MCF 10A (cell line): ENCODE measurements at regions of chr6 and their contacts with region 1.

Region 1: GRCh38 chr6:45421709-45422502 is 44.2 kb upstream of the SUPT3H start:
- DNase-seq: peak; percentile 54
- H3K4me3 Mint-ChIP-seq: peak overlapping the region; percentile 91
- H3K27ac Mint-ChIP-seq: peak overlapping the region; percentile 35
- H3K4me1 Mint-ChIP-seq: peaks cover 17% of the 10 kb centered on the region
- H3K27me3 Mint-ChIP-seq: no peaks in the 10 kb centered on the region
- CTCF ChIP-seq: no peak

Region 2: GRCh38 chr6:44489910-44490604 is 931.8 kb before region 1 on chr6:
- CTCF ChIA-PET with region 1: interaction called, 3 read pairs
- POLR2A ChIA-PET with region 1: no interaction called
- intact Hi-C with region 1: loop called (anchors 5 kb)
- DNase-seq: peak; percentile 95
- H3K4me3 Mint-ChIP-seq: peak overlapping the region; percentile 66
- H3K27ac Mint-ChIP-seq: peak overlapping the region; percentile 95
- H3K4me1 Mint-ChIP-seq: peaks cover 54% of the 10 kb centered on the region
- H3K27me3 Mint-ChIP-seq: no peaks in the 10 kb centered on the region
- CTCF ChIP-seq: no peak

Region 3: DNA sequence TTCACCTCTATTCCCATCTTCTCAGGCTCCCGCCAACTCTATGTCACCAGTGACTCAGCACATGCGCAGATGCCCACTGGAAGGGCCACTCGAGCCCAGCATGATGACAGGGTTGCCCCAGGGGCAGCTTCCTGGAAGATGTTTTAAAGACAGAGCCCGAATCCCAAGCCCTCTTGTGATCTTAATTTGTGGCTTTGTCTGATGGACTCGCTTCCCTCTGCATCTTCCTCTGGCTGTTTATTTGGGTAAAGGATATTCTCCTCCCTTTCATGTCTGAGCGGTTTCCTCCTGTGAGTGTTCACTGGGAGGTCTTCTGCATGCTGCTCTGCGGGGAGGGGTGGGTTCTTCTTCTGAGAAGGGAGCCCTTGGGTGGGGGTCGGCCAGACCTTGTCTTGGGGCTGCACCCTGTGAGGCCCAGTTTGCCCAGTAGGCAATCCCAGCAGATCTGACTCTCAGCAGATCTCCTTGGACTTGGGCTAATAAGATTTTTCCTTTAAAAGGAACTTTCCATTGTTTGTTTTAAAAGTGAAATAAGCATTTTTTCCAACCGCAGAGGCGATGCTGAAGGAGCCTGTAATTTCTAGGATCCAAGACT is 633.4 kb before region 1 on chr6:
- CTCF ChIA-PET with region 1: no interaction called
- POLR2A ChIA-PET with region 1: no interaction called
- intact Hi-C with region 1: no loop called
- DNase-seq: no peak
- H3K4me3 Mint-ChIP-seq: no peak overlapping the region
- H3K27ac Mint-ChIP-seq: no peak overlapping the region
- H3K4me1 Mint-ChIP-seq: peaks cover 9% of the 10 kb centered on the region
- H3K27me3 Mint-ChIP-seq: no peaks in the 10 kb centered on the region
- CTCF ChIP-seq: no peak

Region 4: GRCh38 chr6:44855562-44856411 is 566.1 kb before region 1 on chr6:
- CTCF ChIA-PET with region 1: no interaction called
- POLR2A ChIA-PET with region 1: no interaction called
- intact Hi-C with region 1: loop called (anchors 10 kb)
- DNase-seq: no peak
- H3K4me3 Mint-ChIP-seq: peak overlapping the region; percentile 50
- H3K27ac Mint-ChIP-seq: peak overlapping the region; percentile 74
- H3K4me1 Mint-ChIP-seq: peaks cover 14% of the 10 kb centered on the region
- H3K27me3 Mint-ChIP-seq: no peaks in the 10 kb centered on the region
- CTCF ChIP-seq: no peak

Region 5: GRCh38 chr6:45310118-45310788 is 111.7 kb before region 1 on chr6:
- CTCF ChIA-PET with region 1: no interaction called
- POLR2A ChIA-PET with region 1: no interaction called
- intact Hi-C with region 1: no loop called
- DNase-seq: peak; percentile 1
- H3K4me3 Mint-ChIP-seq: no peak overlapping the region
- H3K27ac Mint-ChIP-seq: no peak overlapping the region
- H3K4me1 Mint-ChIP-seq: no peaks in the 10 kb centered on the region
- H3K27me3 Mint-ChIP-seq: no peaks in the 10 kb centered on the region
- CTCF ChIP-seq: no peak

Region 6: GRCh38 chr6:45436544-45437438 is 14.9 kb after region 1 on chr6:
- CTCF ChIA-PET with region 1: interaction called, 5 read pairs
- POLR2A ChIA-PET with region 1: interaction called, 12 read pairs
- intact Hi-C with region 1: no loop called
- DNase-seq: peak; percentile 78
- H3K4me3 Mint-ChIP-seq: peak overlapping the region; percentile 32
- H3K27ac Mint-ChIP-seq: peak overlapping the region; percentile 39
- H3K4me1 Mint-ChIP-seq: peaks cover 46% of the 10 kb centered on the region
- H3K27me3 Mint-ChIP-seq: no peaks in the 10 kb centered on the region
- CTCF ChIP-seq: no peak

Region 7: DNA sequence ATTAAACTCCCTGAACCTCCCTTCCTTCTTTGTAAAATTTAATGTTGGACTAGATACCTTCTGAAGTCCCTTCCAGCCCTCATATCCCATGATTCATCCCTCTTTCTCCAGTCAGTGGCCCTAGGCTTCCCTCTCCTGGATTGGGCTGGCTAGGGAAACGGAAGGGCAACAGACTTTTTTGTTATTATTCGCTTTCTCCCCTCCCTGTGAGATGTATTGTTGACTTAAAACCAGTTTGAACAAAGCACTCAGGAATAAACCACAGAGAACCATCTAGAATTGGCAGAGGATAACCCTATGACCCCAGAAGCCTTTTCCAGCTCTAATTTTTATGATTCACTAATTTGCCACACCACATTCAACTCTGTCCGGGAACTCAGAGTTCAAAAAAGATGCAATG is 195.5 kb after region 1 on chr6:
- CTCF ChIA-PET with region 1: no interaction called
- POLR2A ChIA-PET with region 1: interaction called, 3 read pairs
- intact Hi-C with region 1: loop called (anchors 2 kb)
- DNase-seq: peak; percentile 66
- H3K4me3 Mint-ChIP-seq: no peak overlapping the region
- H3K27ac Mint-ChIP-seq: peak overlapping the region; percentile 40
- H3K4me1 Mint-ChIP-seq: peaks cover 16% of the 10 kb centered on the region
- H3K27me3 Mint-ChIP-seq: no peaks in the 10 kb centered on the region
- CTCF ChIP-seq: peak; percentile 14